ENCODE measurements at regions of chr17 and their contacts with region 1.

Region 1: GRCh38 chr17:66466840-66467367 is 164.5 kb downstream of the PRKCA start:
- DNase-seq: peak; percentile 85
- ATAC-seq: peak; percentile 91
- H3K4me3 Mint-ChIP-seq: peak overlapping the region; percentile 36
- H3K27ac Mint-ChIP-seq: peak overlapping the region; percentile 92
- H3K4me1 Mint-ChIP-seq: peaks cover 81% of the 10 kb centered on the region
- H3K27me3 Mint-ChIP-seq: no peaks in the 10 kb centered on the region

Region 2: DNA sequence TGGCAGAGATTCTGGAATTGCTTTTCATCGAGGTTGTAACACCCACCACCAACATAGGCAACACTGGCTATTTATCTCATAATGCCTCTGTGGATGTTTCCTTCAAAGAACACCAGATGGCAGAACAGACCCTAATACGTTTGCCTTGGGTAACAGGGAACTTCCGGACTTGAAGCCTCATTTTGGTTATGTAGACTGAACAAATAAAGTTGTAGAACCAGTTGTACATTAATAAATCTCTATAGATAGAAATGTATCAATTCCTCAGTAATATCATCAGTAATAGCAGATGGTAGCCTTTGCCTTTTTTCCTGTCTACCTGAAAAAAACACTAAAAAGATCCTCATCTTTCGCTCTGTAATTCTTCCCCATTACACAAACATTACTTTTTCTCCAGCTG is 211.8 kb before region 1 on chr17:
- CTCF ChIA-PET with region 1: interaction called, 4 read pairs
- POLR2A ChIA-PET with region 1: no interaction called
- intact Hi-C with region 1: loop called in 1 of 2 experiments (anchors 1 kb)
- DNase-seq: peak; percentile 35
- ATAC-seq: peak; percentile 93
- H3K4me3 Mint-ChIP-seq: peak overlapping the region; percentile 51
- H3K27ac Mint-ChIP-seq: peak overlapping the region; percentile 86
- H3K4me1 Mint-ChIP-seq: peaks cover 19% of the 10 kb centered on the region
- H3K27me3 Mint-ChIP-seq: no peaks in the 10 kb centered on the region

Region 3: DNA sequence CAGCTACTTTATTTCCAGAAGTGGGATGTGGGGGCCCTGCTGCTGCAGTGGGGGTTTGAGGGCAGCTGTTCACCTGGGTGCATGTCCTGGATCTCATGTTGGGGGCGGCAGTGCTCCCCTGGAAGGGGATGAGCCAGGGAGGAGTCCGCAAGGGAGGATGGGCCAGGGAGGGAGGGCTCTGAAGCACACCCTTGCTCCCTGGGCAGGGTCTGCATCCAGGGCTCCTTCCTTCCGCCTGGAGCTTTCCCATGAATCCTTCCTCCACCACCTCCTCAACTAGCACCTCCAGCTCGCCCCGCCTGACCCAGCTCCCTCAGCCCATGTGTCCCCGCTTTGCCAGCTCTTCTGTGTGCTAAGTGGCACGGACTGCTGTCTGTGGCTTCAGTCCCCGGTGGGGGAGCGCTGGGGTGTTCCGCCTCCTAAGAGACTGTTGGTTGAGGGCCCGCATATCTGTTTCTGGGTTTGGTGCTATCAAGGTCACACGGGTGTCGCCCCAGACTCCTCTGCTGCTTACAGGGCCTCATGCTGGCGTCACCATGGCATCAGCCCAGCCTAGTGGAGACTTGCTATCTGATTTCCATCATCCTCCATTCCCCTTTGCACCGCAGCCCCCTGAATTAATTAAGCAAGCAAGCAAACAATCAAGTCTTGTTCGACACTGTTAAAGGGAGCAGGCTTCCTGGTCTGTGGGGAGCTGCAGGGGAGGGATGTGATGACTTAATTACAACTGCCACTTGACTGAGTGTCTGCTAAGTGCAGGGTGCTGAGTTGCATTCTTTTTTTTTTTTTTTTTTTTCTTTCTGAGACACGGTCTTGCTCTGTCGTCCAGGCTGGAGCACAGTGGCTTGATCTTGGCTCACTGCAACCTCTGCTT is 92.7 kb before region 1 on chr17:
- CTCF ChIA-PET with region 1: no interaction called
- POLR2A ChIA-PET with region 1: no interaction called
- intact Hi-C with region 1: loop called in 1 of 2 experiments (anchors 1 kb)
- DNase-seq: peak; percentile 53
- ATAC-seq: peak; percentile 59
- H3K4me3 Mint-ChIP-seq: peak overlapping the region; percentile 37
- H3K27ac Mint-ChIP-seq: peak overlapping the region; percentile 88
- H3K4me1 Mint-ChIP-seq: peaks cover 73% of the 10 kb centered on the region
- H3K27me3 Mint-ChIP-seq: no peaks in the 10 kb centered on the region

Region 4: DNA sequence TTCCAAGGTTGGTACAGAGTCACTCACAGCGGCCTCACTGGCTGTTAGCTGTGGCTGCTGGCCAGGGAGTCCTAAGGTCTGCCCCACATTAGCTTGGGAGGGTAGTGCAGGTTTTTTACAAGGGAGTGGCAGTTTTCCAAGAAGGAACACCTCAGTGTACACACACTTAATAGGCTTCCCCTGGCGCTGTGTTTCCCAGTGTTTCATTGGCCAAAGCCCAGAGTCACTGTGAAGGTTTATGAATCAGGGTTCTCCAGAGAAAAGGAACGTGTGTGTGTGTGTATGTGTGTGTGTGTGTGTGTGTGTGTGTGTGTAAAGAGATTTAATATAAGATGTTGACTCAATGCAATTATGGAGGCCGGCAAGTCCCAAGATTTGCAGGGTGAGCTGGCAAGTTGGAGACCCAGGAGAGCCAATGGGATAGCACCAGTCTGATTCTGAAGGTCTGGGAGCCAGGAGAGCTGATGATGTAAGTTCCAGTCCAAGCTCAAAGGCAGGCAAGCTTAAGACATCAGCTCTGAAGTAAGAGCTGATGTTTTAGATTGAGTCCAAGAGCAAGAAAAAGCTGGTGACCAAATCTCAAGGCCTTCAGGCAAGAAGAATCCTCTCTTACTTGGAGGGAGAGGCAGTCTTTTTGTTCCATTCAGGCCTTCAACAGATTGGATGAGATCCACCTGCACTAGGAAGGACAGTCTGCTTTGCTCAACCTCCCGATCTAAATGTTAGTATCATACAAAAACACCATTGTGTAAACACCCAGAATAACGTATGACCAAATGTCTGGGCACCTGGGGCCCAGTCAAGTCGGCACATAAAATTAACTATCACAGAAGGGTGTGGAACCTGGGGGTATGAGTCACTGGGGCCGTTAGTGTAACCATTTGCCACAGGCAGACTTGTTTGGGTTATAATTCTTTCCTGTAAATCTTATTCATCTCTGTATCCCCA is 42.3 kb after region 1 on chr17:
- CTCF ChIA-PET with region 1: interaction called, 5 read pairs
- POLR2A ChIA-PET with region 1: interaction called, 3 read pairs
- intact Hi-C with region 1: loop called (anchors 1 kb)
- DNase-seq: peak; percentile 80
- ATAC-seq: peak; percentile 68
- H3K4me3 Mint-ChIP-seq: peak overlapping the region; percentile 49
- H3K27ac Mint-ChIP-seq: peak overlapping the region; percentile 93
- H3K4me1 Mint-ChIP-seq: peaks cover 72% of the 10 kb centered on the region
- H3K27me3 Mint-ChIP-seq: no peaks in the 10 kb centered on the region

Region 5: GRCh38 chr17:66567234-66568170 is 100.6 kb after region 1 on chr17:
- CTCF ChIA-PET with region 1: interaction called, 11 read pairs
- POLR2A ChIA-PET with region 1: no interaction called
- intact Hi-C with region 1: loop called in 1 of 2 experiments (anchors 2 kb)
- DNase-seq: peak; percentile 90
- ATAC-seq: peak; percentile 88
- H3K4me3 Mint-ChIP-seq: no peak overlapping the region
- H3K27ac Mint-ChIP-seq: peak overlapping the region; percentile 31
- H3K4me1 Mint-ChIP-seq: peaks cover 40% of the 10 kb centered on the region
- H3K27me3 Mint-ChIP-seq: no peaks in the 10 kb centered on the region

Measured in activated CD4-positive, alpha-beta T cell treated with anti-CD3 and anti-CD28 coated beads for 36 hours (primary cell).